Ascending aorta (tissue), 2 donors: ENCODE measurements at regions of chr10 and their contacts with region 1.

Region 1: GRCh38 chr10:132223156-132223590 is 36.4 kb downstream of the DPYSL4 start:
- DNase-seq: peak; percentile 24 to 82
- H3K4me3 ChIP-seq: no peak overlapping the region
- H3K27ac ChIP-seq: no peak overlapping the region
- H3K4me1 ChIP-seq: no peaks in the 10 kb centered on the region
- H3K27me3 ChIP-seq: no peaks in the 10 kb centered on the region
- CTCF ChIP-seq: peak; percentile 52 to 92 (median 91)

Region 2: DNA sequence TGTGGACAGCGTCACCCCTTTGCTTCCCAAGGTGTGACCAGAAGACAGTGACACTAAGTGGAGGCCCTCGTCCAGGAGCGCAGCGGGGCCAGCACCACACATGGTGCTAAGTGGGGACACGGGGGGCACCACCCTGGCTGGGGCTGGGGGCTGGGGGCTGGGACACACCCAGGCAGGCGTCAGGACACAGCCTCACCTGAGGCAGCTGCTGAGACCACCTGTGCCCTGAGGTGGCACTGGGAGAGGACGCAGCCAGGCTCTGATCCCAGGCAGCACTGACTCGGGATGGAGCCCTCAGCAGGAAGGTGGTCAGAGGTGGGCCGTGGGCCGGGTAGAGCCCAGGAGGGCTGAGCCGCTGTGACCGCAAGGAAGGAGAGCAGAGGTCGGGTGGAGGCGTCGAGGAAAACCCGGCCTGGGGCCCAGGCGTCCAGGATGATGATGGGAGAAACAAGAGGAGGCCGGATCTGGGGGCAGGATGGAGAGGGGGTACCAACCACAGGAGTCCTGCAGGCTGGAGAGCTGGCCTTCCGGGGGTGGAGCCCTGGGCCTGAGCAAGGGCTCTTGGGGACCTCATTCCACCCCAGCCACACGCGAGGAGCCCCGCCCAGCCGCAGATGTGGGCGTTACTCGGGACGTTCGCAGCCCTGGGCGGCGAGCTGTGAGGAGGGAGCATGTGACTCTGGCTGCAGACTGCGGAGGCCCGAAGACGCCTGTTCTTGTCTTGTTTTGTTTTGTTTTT is 131.4 kb after region 1 on chr10:
- intact Hi-C with region 1: loop called (anchors 2 kb)
- DNase-seq: no peak
- H3K4me3 ChIP-seq: no peak overlapping the region
- H3K27ac ChIP-seq: no peak overlapping the region
- H3K4me1 ChIP-seq: no peaks in the 10 kb centered on the region
- H3K27me3 ChIP-seq: no peaks in the 10 kb centered on the region
- CTCF ChIP-seq: no peak

Region 3: DNA sequence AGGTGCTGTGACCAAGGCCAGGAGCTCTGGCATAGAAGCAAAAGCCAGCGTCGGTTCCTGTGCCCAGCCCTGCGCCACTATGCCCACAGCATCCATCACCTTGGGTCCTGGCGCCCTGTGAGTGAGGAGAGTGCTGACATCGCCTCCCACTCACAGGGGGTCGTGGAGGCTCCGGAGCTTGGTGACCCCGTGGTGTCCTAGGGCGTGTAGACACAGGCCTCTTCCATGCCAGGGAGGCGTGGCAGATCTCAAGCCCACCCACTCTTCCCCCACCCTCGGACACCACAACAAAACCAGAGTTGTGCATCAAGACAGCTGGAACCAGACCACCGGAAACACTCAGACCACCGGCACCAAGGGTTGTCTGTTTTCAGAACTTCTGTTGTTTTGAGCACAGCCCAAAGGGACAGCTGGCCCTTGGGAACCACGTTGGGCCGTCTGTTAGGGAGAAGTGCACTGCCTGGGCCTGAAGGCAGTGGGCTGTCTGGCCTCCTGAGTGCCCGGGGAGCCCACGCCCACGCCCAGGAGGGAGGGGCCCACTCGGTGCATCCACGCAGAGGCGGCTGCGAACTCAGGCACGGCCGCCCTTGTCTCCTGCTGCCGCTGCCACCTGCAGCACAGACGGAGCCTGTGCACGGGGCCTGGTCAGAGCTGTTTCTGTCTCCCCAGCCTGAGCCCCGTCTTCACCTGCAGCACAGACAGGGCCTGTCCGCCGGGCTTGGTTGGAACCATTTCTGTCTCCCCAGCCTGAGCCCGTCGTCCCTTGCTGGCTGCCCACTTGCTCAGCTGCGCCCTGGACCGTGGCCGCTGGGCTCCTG is 420.7 kb after region 1 on chr10:
- intact Hi-C with region 1: loop called (anchors 10 kb)
- DNase-seq: peak in 1 of 2 donors; percentile 53
- H3K4me3 ChIP-seq: no peak overlapping the region
- H3K27ac ChIP-seq: no peak overlapping the region
- H3K4me1 ChIP-seq: no peaks in the 10 kb centered on the region
- H3K27me3 ChIP-seq: no peaks in the 10 kb centered on the region
- CTCF ChIP-seq: no peak